A673 (cell line): ENCODE measurements at regions of chr5 and their contacts with region 1.

Region 1: GRCh38 chr5:140966293-140967225 is at the start of gene PCDHAC2:
- DNase-seq: peak; percentile 87
- H3K4me3 ChIP-seq: peak within 1 kb of the TSS; percentile 68
- H3K27ac ChIP-seq: peak within 1 kb of the TSS; percentile 71
- H3K4me1 ChIP-seq: peaks cover 55% of the 10 kb centered on the region
- H3K27me3 ChIP-seq: no peaks in the 10 kb centered on the region
- CTCF ChIP-seq: no peak
- total RNA-seq, gene PCDHAC2: 6.8 and 7.1 TPM in 2 replicates

Region 2: DNA sequence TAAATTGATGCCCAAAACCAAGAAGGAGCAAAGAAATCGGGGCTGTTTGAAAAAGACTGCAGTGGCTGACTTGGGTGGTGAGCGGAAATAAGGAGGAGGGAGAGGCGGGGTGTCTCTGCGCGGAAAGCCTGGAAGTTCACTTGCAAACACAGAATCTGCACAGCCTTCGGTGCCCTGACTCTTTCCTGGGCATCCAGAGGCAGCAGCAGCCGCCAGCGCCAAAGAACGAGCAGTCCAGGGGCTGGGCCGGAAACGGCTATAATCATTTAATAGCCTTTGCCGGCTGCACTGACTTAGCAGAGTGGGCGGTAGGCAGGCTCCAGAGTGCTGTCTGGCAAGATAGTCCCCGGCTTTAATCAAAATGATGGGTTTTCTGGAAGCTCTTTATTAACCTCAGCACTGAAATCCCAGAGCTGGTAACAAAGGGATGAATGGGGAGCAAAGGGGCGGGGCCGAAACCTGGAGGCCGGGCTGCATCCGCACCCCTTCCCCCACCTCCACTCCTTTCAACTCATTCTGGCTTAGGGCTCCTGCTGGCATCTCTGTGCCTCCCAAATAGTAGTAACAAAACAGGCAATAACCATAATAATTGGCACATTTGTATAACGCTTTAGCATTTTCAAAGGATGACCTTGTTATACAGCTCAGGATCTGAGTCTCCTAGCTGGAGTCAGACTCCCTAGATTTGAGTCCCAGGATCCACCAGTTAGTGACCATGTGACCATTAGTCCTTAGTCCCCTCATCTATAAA is 35.5 kb after region 1 on chr5:
- CTCF ChIA-PET with region 1: no interaction called
- POLR2A ChIA-PET with region 1: no interaction called
- intact Hi-C with region 1: loop called (anchors 5 kb)
- DNase-seq: peak; percentile 98
- H3K4me3 ChIP-seq: peak overlapping the region; percentile 38
- H3K27ac ChIP-seq: peak overlapping the region; percentile 91
- H3K4me1 ChIP-seq: peaks cover 72% of the 10 kb centered on the region
- H3K27me3 ChIP-seq: no peaks in the 10 kb centered on the region
- CTCF ChIP-seq: no peak

Region 3: DNA sequence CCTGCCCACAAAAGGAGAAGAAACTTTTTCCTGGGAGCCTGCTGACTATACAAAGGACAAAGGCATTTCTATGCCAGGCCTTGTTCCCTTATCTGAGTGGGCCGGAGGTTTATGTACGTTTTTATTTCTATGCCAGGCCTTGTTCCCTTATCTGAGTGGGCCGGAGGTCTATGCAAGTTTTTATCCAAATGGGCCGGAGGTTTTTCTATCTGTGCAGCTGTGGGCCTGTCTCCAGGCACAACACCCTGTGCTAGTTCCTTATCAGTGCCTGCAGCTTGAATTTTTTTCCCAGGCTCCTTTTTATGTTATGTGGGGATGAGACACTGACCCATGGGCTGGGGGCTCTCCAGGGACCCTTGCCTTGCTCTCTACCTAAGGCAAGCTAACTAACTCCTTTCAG is 331.8 kb after region 1 on chr5:
- CTCF ChIA-PET with region 1: no interaction called
- POLR2A ChIA-PET with region 1: no interaction called
- intact Hi-C with region 1: no loop called
- DNase-seq: no peak
- H3K4me3 ChIP-seq: no peak overlapping the region
- H3K27ac ChIP-seq: no peak overlapping the region
- H3K4me1 ChIP-seq: no peaks in the 10 kb centered on the region
- H3K27me3 ChIP-seq: no peaks in the 10 kb centered on the region
- CTCF ChIP-seq: no peak

Region 4: GRCh38 chr5:141778206-141778605 is 811.6 kb after region 1 on chr5:
- CTCF ChIA-PET with region 1: no interaction called
- POLR2A ChIA-PET with region 1: no interaction called
- intact Hi-C with region 1: no loop called
- DNase-seq: peak; percentile 87
- H3K4me3 ChIP-seq: no peak overlapping the region
- H3K27ac ChIP-seq: peak overlapping the region; percentile 22
- H3K4me1 ChIP-seq: peaks cover 23% of the 10 kb centered on the region
- H3K27me3 ChIP-seq: no peaks in the 10 kb centered on the region
- CTCF ChIP-seq: no peak

Region 5: DNA sequence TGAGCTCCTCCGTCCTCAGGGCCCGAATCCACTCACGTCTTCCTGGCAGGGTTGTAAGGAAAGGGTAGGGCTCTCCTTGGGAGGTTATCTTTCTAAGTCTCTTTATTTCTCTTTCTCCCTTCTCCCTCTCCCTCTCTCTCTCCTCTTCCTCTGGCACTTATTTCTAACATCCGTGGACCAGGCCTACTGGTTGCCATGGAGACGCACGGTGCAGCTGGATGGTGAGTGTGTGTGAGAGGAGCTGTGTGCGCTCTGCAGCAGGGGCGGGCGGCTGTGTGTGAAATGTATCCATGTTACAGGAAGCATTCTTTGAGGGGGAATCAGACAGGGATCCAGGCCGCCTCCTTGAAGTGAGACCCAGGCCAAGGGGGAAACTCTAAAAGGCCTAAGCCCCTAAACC is 879.5 kb after region 1 on chr5:
- CTCF ChIA-PET with region 1: no interaction called
- POLR2A ChIA-PET with region 1: interaction called, 10 read pairs
- intact Hi-C with region 1: no loop called
- DNase-seq: peak; percentile 45
- H3K4me3 ChIP-seq: no peak overlapping the region
- H3K27ac ChIP-seq: no peak overlapping the region
- H3K4me1 ChIP-seq: peaks cover 19% of the 10 kb centered on the region
- H3K27me3 ChIP-seq: no peaks in the 10 kb centered on the region
- CTCF ChIP-seq: no peak